ENCODE measurements at regions of chr3 and their contacts with region 1.

Region 1: DNA sequence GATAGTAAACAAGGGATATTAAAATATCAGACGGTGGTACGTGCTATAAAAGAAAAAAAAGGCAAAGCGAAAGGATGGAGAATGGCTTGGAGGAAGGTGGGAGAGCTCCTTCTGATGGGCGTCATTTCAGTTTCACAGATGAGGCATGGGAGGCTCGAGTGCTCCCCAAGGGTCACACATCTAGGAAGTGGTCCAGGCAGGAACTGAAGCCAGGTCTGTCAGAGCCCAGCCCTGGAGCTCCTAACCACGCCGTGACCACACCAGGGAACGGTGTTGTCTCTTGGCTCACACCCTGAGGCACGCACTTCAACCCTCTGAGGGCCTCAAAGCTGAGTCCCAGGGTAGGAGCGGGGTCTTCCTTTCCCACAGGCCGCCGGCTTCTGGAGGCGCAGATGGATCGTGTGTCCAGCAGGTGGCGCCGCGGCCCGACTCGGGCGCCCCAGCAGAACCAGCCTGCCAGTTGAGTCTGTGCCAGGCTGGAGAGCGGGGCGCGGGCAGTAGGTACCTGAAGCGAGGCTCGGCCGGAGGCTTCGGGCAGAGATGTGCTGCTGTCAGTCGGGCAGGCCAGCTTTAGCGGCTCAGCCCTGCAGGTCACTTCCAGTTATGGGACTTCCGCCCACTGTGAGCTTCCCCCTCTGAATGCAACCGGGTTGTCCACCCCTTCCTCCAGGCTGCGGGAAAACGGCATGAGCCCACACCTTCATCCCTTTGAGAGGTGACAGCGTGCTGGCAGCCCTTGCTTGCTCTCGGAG is 68.1 kb downstream of the SLC6A1 start:
- DNase-seq: peak in 1 of 2 experiments; percentile 89
- H3K4me3 ChIP-seq: peak overlapping the region; percentile 4 to 57 (median 35); a peak in 7 of 8 replicates
- H3K27ac ChIP-seq: no peak overlapping the region
- H3K4me1 ChIP-seq: peaks cover 0 to 6% (median 1%) of the 10 kb centered on the region in 4 experiments; a peak in 2 of 7 replicates
- H3K27me3 ChIP-seq: peaks cover 9 to 21% (median 14%) of the 10 kb centered on the region in 4 experiments; a peak in 6 of 7 replicates
- CTCF ChIP-seq: peak; percentile 84 to 93 (median 85)
- EP300 ChIP-seq: no peak
- POLR2A ChIP-seq: no peak
- RAD21 ChIP-seq: peak; percentile 73 to 84

Region 2: GRCh38 chr3:10437272-10437994 is 623.2 kb before region 1 on chr3:
- CTCF ChIA-PET with region 1: no interaction called
- POLR2A ChIA-PET with region 1: no interaction called
- DNase-seq: no peak
- H3K4me3 ChIP-seq: no peak overlapping the region
- H3K27ac ChIP-seq: no peak overlapping the region
- H3K4me1 ChIP-seq: no peaks in the 10 kb centered on the region
- H3K27me3 ChIP-seq: no peaks in the 10 kb centered on the region
- CTCF ChIP-seq: no peak
- EP300 ChIP-seq: no peak
- POLR2A ChIP-seq: no peak
- RAD21 ChIP-seq: no peak

Region 3: DNA sequence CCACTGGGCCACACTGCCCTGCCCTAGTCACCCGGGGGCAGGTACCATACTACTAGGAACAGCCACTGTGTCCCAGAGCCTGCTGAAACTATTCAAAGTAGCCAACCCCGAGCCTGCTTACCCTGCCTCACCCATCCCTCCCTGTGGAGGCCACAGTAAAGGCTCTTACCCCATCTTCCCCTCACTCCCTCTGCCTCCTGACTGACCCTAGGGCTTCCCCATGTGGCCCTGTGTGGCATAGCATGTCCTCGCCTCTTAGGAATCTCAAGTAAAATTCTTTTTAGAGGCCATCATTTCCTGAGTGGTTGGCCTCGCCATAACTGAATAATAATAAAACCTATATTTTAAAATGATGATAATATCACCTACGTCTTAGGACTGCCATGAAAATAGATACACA is 356.8 kb before region 1 on chr3:
- CTCF ChIA-PET with region 1: no interaction called
- POLR2A ChIA-PET with region 1: no interaction called
- DNase-seq: peak; percentile 49 to 66
- H3K4me3 ChIP-seq: no peak overlapping the region
- H3K27ac ChIP-seq: no peak overlapping the region
- H3K4me1 ChIP-seq: peaks cover 2 to 10% (median 6%) of the 10 kb centered on the region in 4 experiments
- H3K27me3 ChIP-seq: peaks cover 8 to 39% (median 31%) of the 10 kb centered on the region in 4 experiments
- CTCF ChIP-seq: peak; percentile 78 to 87 (median 79)
- EP300 ChIP-seq: peak in 1 of 2 experiments; percentile 84; a peak in 1 of 3 replicates
- POLR2A ChIP-seq: no peak
- RAD21 ChIP-seq: peak; percentile 90 to 95

Region 4: DNA sequence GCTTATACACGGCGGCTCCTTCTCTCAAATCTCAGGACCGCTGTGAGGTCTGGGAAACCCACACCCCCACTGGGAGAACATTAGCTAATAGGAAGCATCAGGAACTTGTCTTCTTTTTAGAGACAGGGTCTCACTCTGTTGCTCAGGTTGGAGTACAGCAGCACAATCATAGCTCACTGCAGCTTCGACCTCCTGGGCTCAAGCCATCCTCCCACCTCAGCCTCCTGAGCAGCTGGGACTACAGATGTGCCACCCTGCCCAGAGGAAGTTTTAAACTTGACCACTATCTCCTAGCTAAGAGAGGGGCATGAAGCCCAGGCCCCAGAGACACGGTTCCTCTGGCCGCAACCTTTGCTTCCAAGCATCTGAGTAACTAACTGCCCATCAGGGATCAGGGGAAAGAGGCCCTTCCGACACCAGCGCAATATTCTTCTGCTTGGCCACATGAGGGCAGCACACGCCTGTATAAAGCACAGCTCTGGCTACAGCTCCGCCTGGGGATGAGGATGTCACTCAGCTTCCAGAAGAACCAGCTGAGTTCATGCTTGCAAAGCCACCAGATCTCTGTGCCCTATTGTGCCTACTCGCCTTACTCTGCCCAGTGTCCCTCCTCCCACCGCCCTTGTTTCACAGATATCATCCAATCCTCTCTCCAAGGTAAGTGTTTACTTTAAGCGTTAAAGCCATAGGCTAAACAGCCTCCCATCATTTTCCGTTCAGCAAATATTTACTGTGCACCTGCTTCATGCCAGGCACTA is 302.2 kb before region 1 on chr3:
- CTCF ChIA-PET with region 1: interaction called, 101 read pairs
- POLR2A ChIA-PET with region 1: no interaction called
- DNase-seq: peak in 1 of 2 experiments; percentile 69
- H3K4me3 ChIP-seq: no peak overlapping the region
- H3K27ac ChIP-seq: no peak overlapping the region
- H3K4me1 ChIP-seq: peaks cover 0 to 5% (median 0%) of the 10 kb centered on the region in 4 experiments; a peak in 3 of 7 replicates
- H3K27me3 ChIP-seq: peaks cover 0 to 2% (median 0%) of the 10 kb centered on the region in 4 experiments; a peak in 2 of 7 replicates
- CTCF ChIP-seq: peak; percentile 85 to 98 (median 94)
- EP300 ChIP-seq: no peak
- POLR2A ChIP-seq: no peak
- RAD21 ChIP-seq: peak; percentile 96 to 99

Region 5: GRCh38 chr3:10855871-10856662 is 204.6 kb before region 1 on chr3:
- CTCF ChIA-PET with region 1: no interaction called
- POLR2A ChIA-PET with region 1: no interaction called
- DNase-seq: peak in 1 of 2 experiments; percentile 52
- H3K4me3 ChIP-seq: no peak overlapping the region
- H3K27ac ChIP-seq: no peak overlapping the region
- H3K4me1 ChIP-seq: no peaks in the 10 kb centered on the region
- H3K27me3 ChIP-seq: peaks cover 0 to 3% (median 0%) of the 10 kb centered on the region in 4 experiments; a peak in 1 of 7 replicates
- CTCF ChIP-seq: peak; percentile 43 to 76 (median 65); a peak in 3 of 4 replicates
- EP300 ChIP-seq: no peak
- POLR2A ChIP-seq: no peak
- RAD21 ChIP-seq: peak; percentile 29 to 35

Region 6: DNA sequence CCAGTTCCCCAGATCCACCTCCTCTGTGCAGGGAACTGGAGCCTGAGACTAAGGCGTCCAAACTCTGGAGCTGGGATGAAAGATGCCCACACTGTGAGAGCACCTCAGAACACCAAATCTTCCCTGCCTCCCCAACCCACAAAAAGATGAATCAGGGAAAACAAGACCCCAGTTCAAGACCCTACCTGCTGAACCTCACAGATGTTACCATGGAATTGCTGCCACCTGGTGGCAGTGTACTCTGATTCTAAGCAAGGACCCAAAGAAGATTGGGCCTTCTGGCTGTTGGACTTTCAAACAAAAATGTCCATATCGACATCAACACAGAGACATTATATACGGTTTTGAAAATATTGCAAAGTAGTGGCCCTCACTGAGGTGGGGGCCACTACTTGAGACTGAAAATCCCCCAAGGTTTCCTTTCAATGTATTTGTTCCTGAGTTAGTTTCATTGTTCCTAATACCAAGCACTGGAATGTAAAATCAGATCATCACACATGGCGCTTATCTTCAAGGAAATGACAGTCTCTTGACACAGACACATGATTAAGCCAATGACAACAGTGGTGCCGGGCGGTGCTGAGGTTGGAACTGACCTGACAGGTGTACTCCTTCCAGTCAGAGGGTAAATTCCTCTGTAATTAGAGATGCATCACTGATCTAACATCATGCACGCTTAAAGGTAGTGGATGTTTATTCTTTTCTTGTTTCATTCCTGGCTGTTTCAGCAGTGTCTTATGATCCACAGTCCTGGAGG is 177.0 kb before region 1 on chr3:
- CTCF ChIA-PET with region 1: interaction called, 11 read pairs
- POLR2A ChIA-PET with region 1: no interaction called
- DNase-seq: peak in 1 of 2 experiments; percentile 61
- H3K4me3 ChIP-seq: no peak overlapping the region
- H3K27ac ChIP-seq: no peak overlapping the region
- H3K4me1 ChIP-seq: no peaks in the 10 kb centered on the region; a peak in 1 of 7 replicates
- H3K27me3 ChIP-seq: peaks cover 0 to 15% (median 10%) of the 10 kb centered on the region in 4 experiments; a peak in 6 of 7 replicates
- CTCF ChIP-seq: peak in 2 of 3 experiments; percentile 66 to 68; a peak in 3 of 4 replicates
- EP300 ChIP-seq: no peak
- POLR2A ChIP-seq: no peak
- RAD21 ChIP-seq: peak; percentile 70 to 76

Region 7: DNA sequence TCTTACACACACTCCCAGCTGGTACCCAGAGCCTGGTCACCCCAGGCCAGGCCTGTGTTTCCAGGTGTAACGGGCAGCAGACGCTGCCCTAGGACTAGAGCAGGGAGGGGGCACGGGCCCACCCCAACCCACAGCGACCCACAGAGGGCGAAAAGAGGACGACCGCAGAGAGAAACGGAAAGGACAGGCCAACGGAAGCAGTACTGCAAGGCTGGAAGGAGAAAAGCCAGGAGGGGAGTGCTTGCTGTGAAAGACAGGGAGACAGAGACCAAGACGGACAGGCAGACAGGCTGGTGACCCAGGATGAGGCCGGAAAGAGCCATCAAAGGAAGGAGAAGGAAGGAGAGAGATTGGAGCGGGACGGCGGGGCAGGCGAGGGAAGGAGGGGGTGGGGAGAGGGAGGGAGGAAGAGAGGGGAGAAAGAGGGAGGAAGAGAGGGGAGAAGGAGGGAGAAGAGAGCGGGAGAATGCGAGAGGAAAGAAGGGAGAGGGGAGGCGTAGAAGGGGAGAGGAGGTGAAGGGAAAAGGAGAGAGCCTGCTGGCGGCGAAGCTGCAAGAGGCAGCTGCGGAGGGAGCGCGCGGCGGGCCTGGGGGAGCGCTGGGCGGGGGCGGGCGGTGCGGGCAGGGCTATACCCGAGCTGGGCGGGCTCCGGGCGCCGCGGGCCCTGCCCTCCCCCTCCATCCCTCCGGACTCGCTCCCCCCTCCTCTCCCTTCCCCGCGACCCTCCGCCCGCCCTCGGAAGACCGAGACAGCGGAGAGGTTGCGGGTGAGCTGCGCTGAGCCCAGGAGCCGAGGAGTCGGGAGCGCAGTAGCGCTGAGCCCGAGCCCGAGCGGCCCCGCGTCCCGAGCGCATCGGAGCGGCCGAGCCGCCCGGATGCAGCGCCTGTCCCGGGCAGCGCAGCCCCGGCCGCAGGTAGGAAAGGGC is 68.4 kb before region 1 on chr3 and contains the start of gene SLC6A1:
- CTCF ChIA-PET with region 1: interaction called, 60 read pairs
- POLR2A ChIA-PET with region 1: no interaction called
- DNase-seq: peak in 1 of 2 experiments; percentile 83
- H3K4me3 ChIP-seq: peak within 1 kb of the TSS; percentile 66 to 86 (median 75)
- H3K27ac ChIP-seq: no peak within 1 kb of the TSS
- H3K4me1 ChIP-seq: peaks cover 0 to 11% (median 5%) of the 10 kb centered on the region in 4 experiments; a peak in 5 of 7 replicates
- H3K27me3 ChIP-seq: peaks cover 20 to 41% (median 39%) of the 10 kb centered on the region in 4 experiments
- CTCF ChIP-seq: peak; percentile 62 to 71 (median 71)
- EP300 ChIP-seq: no peak
- POLR2A ChIP-seq: no peak
- RAD21 ChIP-seq: peak; percentile 50 to 63; a peak in 3 of 4 replicates
- total RNA-seq, gene SLC6A1: 0.30 and 0.31 TPM in 2 replicates

Region 8: GRCh38 chr3:11029948-11030347 is 30.7 kb before region 1 on chr3:
- CTCF ChIA-PET with region 1: interaction called, 13 read pairs
- POLR2A ChIA-PET with region 1: no interaction called
- DNase-seq: no peak
- H3K4me3 ChIP-seq: no peak overlapping the region
- H3K27ac ChIP-seq: no peak overlapping the region
- H3K4me1 ChIP-seq: no peaks in the 10 kb centered on the region
- H3K27me3 ChIP-seq: no peaks in the 10 kb centered on the region
- CTCF ChIP-seq: no peak
- EP300 ChIP-seq: no peak
- POLR2A ChIP-seq: no peak
- RAD21 ChIP-seq: no peak

Region 9: GRCh38 chr3:11120091-11120805 is 59.6 kb after region 1 on chr3:
- CTCF ChIA-PET with region 1: interaction called, 14 read pairs
- POLR2A ChIA-PET with region 1: no interaction called
- DNase-seq: no peak
- H3K4me3 ChIP-seq: no peak overlapping the region
- H3K27ac ChIP-seq: no peak overlapping the region
- H3K4me1 ChIP-seq: peaks cover 0 to 5% (median 0%) of the 10 kb centered on the region in 4 experiments; a peak in 1 of 7 replicates
- H3K27me3 ChIP-seq: no peaks in the 10 kb centered on the region
- CTCF ChIP-seq: no peak
- EP300 ChIP-seq: no peak
- POLR2A ChIP-seq: no peak
- RAD21 ChIP-seq: no peak

Region 10: GRCh38 chr3:11201246-11202024 is 140.8 kb after region 1 on chr3:
- CTCF ChIA-PET with region 1: interaction called, 40 read pairs
- POLR2A ChIA-PET with region 1: no interaction called
- DNase-seq: no peak
- H3K4me3 ChIP-seq: no peak overlapping the region
- H3K27ac ChIP-seq: no peak overlapping the region
- H3K4me1 ChIP-seq: peaks cover 0 to 2% (median 0%) of the 10 kb centered on the region in 4 experiments; a peak in 4 of 7 replicates
- H3K27me3 ChIP-seq: no peaks in the 10 kb centered on the region
- CTCF ChIP-seq: no peak
- EP300 ChIP-seq: no peak
- POLR2A ChIP-seq: no peak
- RAD21 ChIP-seq: no peak